HepG2 (cell line): ENCODE measurements at regions of chr3 and their contacts with region 1.

Region 1: GRCh38 chr3:123066896-123067688 is at the start of gene PDIA5:
- DNase-seq: peak; percentile 84
- ATAC-seq: peak; percentile 88
- H3K4me3 ChIP-seq: peak within 1 kb of the TSS; percentile 76 to 95 (median 92)
- H3K27ac ChIP-seq: peak within 1 kb of the TSS; percentile 68
- H3K4me1 ChIP-seq: peaks cover 32% of the 10 kb centered on the region
- H3K27me3 ChIP-seq: peaks cover 0 to 11% of the 10 kb centered on the region in 2 experiments; a peak in 1 of 5 replicates
- CTCF ChIP-seq: no peak; the same call in 1 of the 2 replicates
- EP300 ChIP-seq: peak in 1 of 2 experiments; percentile 10; a peak in 1 of 4 replicates
- POLR2A ChIP-seq: peak in 1 of 2 experiments; percentile 83; a peak in 3 of 4 replicates
- RAD21 ChIP-seq: no peak; the same call in none of the 2 replicates
- total RNA-seq, gene PDIA5: 19.5 and 51.3 TPM in 2 replicates

Region 2: DNA sequence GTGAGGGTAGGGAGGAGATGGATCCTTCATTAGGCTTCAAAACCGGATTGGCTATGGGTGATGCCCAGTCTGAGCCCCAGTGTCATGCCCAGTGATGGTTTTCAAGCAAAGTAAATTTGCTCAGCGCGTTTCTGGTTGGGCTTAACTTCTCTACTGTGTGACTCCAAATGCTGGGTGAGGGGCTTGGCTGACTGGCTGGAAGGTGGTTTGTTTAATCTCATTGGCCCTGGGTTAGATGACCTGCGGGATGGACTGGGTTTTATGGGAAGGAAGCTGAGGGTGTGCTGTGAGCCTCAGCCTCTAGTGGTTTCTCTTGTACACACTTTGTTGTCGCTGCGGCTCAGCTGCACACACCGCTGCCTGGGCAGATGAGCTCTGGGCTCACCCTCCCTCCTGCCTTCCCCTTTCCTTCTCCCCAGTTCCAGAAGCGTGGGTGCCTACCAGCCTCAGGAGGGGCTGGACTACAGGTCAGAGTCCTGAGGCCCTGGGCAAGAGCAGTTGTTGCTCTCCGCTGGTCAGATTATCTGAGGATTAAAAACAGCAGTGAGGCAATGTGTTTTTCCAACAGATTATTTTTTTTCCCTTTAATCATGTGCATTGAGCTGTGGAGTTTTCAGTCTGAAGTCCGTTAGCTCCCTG is 18.3 kb after region 1 on chr3:
- CTCF ChIA-PET with region 1: no interaction called
- POLR2A ChIA-PET with region 1: interaction called, 19 read pairs
- in situ Hi-C with region 1: no loop called
- intact Hi-C with region 1: loop called (anchors 1 kb)
- DNase-seq: peak; percentile 80
- ATAC-seq: peak; percentile 85
- H3K4me3 ChIP-seq: peak overlapping the region; percentile 23 to 61 (median 36); a peak in 5 of 6 replicates
- H3K27ac ChIP-seq: peak overlapping the region; percentile 83
- H3K4me1 ChIP-seq: peaks cover 78% of the 10 kb centered on the region
- H3K27me3 ChIP-seq: no peaks in the 10 kb centered on the region
- CTCF ChIP-seq: peak; percentile 37
- EP300 ChIP-seq: peak in 1 of 2 experiments; percentile 69; a peak in 1 of 4 replicates
- POLR2A ChIP-seq: peak in 1 of 2 experiments; percentile 31; a peak in 2 of 4 replicates
- RAD21 ChIP-seq: peak; percentile 19; the same call in 1 of the 2 replicates

Region 3: DNA sequence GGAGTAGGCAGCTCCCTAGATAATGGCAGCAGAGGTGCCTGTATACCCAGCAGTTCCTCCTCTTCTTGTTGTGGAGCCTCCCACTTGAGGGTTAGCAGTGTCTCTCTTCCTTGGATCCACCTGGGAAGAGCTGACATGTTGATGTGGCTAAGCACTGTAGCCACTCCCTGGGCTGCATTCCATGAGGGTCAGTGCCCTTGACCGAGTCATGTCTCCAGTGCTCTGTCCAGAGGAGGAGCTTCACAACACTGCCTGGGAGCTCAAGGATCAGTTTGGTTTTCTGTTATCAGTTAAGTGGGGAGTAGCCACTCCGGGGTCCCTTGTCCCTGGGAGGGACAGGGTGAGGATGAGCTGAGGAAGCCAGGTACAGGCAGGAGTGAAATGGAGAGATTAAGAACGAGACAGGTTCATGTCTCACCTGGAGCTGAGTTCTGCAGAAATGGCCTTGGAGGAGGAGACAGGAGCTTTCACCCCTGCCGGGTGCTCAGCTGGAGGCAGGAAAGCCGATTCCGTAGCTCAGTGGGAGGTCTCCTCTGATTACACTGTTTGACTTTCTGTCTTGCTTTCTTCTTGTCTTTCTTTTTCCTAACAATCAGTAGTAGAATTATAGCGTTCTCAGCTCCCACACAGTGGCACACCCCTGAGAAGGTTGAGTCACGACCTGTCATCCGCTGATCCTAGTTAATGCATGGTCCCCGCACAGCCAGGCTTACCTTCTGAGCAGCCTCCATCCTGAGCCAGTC is 76.7 kb after region 1 on chr3:
- CTCF ChIA-PET with region 1: no interaction called
- POLR2A ChIA-PET with region 1: no interaction called
- in situ Hi-C with region 1: no loop called
- intact Hi-C with region 1: loop called (anchors 5 kb)
- DNase-seq: peak; percentile 58
- ATAC-seq: peak; percentile 94
- H3K4me3 ChIP-seq: no peak overlapping the region
- H3K27ac ChIP-seq: peak overlapping the region; percentile 30
- H3K4me1 ChIP-seq: peaks cover 26% of the 10 kb centered on the region
- H3K27me3 ChIP-seq: no peaks in the 10 kb centered on the region
- CTCF ChIP-seq: no peak
- EP300 ChIP-seq: 0 out of 4 replicates have a peak, but pooled peaks of 1 of the 2 experiments have one; percentile 48
- POLR2A ChIP-seq: no peak
- RAD21 ChIP-seq: no peak

Region 4: GRCh38 chr3:123201566-123202427 is 134.7 kb after region 1 on chr3 and contains the start of gene SEC22A:
- CTCF ChIA-PET with region 1: no interaction called
- POLR2A ChIA-PET with region 1: interaction called, 10 read pairs
- in situ Hi-C with region 1: no loop called
- intact Hi-C with region 1: no loop called
- DNase-seq: peak; percentile 91
- ATAC-seq: peak; percentile 99
- H3K4me3 ChIP-seq: peak within 1 kb of the TSS; percentile 89 to 99 (median 94)
- H3K27ac ChIP-seq: peak within 1 kb of the TSS; percentile 52
- H3K4me1 ChIP-seq: peaks cover 21% of the 10 kb centered on the region
- H3K27me3 ChIP-seq: no peaks in the 10 kb centered on the region; a peak in 1 of 5 replicates
- CTCF ChIP-seq: no peak
- EP300 ChIP-seq: no peak
- POLR2A ChIP-seq: peak; percentile 67 to 87
- RAD21 ChIP-seq: peak; percentile 5; the same call in 1 of the 2 replicates
- total RNA-seq, gene SEC22A: 17.3 and 20.2 TPM in 2 replicates